ENCODE measurements at regions of chr13 and their contacts with region 1.

Region 1: DNA sequence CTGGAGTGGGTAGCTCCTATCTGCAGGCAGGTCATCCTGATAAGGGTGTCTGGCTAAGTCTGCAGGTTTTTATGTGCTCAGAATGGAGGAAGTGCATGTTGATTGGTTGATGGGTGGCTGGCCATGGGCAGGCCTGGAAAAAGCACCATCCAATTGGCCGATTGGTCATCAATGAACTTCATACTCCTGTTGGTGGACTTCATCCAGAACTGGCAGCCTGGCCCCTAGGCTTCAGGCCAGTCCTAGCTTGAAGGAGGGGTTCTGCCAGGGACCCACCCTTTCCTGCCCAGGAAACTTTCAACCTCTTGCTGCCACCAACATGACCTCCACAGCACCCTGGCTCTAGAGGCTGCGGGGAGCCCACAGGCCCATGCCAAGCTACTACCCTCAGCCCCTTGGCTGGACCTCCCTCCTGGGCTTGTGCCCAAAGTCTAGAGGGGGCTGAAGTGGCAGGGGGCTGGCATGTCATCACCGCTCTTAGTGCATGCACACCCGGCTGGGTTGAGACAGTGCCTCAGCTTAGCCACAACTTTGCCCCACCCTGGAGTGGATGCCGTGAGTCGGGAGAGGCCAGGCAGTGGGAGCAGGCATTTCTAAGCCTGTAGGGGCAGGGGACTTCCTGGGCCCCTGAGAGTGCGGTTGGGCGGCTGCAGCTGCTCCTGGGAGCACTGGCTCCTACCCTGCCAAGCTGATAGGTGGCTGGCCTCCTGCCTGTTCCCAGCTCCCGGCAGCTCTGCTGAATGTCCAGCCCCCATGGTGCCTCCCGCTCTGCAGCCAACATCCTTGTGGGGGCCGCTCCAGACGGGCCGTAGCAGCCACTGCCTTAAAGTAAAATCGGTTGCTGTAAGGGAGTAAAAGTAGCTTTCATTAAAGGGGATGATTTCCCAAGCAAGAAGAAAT is 13.2 kb downstream of the DNAJC15 start:
- DNase-seq: no peak
- H3K4me3 Mint-ChIP-seq: no peak overlapping the region
- H3K27ac Mint-ChIP-seq: no peak overlapping the region
- H3K4me1 Mint-ChIP-seq: peaks cover 8% of the 10 kb centered on the region
- H3K27me3 Mint-ChIP-seq: no peaks in the 10 kb centered on the region

Region 2: DNA sequence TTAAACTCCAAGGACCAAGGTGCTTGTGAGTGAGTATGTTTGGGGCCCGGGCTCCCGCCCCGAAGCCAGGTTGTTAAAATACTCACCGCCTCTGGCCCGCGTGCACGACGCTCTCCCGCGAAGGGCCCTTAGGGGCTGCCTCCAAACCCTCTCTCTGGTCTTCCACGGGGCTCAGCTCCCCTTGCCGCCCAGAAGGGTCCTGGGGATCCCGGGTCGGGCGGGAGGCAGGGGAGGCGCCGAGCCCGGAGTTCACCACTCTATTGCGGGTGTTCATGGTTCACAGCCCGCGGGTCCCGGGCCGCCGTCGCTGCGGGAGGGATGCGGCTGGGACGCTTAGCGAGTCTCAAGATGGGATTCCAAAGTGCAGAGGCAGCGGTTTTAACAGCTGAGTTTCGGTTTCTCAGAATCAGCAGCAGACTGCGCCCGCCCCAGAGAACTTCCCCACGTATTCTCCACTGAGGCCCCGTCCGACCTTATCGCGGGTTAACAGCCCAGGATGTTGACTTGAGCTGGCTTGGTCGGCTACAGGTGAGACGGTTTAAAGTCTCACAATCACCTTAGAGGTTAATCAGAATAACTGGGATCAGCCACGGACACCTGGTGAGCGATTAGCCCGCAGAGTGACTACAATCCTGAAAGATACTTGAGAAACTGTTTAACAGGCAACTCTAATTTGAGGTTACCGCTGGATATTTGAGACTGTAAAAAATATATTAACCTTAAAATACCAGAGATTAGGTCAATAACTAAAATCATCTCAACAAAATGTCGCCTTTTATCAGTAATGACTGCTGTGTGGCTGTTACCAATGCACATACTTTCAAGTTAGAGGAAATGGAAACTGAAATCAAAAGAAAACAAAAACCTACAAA is 44.5 kb before region 1 on chr13 and contains the start of gene EPSTI1:
- CTCF ChIA-PET with region 1: no interaction called
- POLR2A ChIA-PET with region 1: no interaction called
- DNase-seq: peak; percentile 87
- H3K4me3 Mint-ChIP-seq: peak within 1 kb of the TSS; percentile 96
- H3K27ac Mint-ChIP-seq: peak within 1 kb of the TSS; percentile 99
- H3K4me1 Mint-ChIP-seq: peaks cover 65% of the 10 kb centered on the region
- H3K27me3 Mint-ChIP-seq: no peaks in the 10 kb centered on the region
- total RNA-seq, gene EPSTI1: 128 to 135 TPM

Region 3: GRCh38 chr13:43023289-43023951 is 13.2 kb before region 1 on chr13 and contains the start of gene DNAJC15:
- CTCF ChIA-PET with region 1: interaction called, 5 read pairs
- POLR2A ChIA-PET with region 1: interaction called, 14 read pairs
- DNase-seq: peak; percentile 88
- H3K4me3 Mint-ChIP-seq: peak within 1 kb of the TSS; percentile 97
- H3K27ac Mint-ChIP-seq: peak within 1 kb of the TSS; percentile 87
- H3K4me1 Mint-ChIP-seq: peaks cover 37% of the 10 kb centered on the region
- H3K27me3 Mint-ChIP-seq: no peaks in the 10 kb centered on the region
- total RNA-seq, gene DNAJC15: 14.6 to 16.3 TPM